Stomach (tissue), 19 donors: ENCODE measurements at regions of chr9 and their contacts with region 1.

Region 1: DNA sequence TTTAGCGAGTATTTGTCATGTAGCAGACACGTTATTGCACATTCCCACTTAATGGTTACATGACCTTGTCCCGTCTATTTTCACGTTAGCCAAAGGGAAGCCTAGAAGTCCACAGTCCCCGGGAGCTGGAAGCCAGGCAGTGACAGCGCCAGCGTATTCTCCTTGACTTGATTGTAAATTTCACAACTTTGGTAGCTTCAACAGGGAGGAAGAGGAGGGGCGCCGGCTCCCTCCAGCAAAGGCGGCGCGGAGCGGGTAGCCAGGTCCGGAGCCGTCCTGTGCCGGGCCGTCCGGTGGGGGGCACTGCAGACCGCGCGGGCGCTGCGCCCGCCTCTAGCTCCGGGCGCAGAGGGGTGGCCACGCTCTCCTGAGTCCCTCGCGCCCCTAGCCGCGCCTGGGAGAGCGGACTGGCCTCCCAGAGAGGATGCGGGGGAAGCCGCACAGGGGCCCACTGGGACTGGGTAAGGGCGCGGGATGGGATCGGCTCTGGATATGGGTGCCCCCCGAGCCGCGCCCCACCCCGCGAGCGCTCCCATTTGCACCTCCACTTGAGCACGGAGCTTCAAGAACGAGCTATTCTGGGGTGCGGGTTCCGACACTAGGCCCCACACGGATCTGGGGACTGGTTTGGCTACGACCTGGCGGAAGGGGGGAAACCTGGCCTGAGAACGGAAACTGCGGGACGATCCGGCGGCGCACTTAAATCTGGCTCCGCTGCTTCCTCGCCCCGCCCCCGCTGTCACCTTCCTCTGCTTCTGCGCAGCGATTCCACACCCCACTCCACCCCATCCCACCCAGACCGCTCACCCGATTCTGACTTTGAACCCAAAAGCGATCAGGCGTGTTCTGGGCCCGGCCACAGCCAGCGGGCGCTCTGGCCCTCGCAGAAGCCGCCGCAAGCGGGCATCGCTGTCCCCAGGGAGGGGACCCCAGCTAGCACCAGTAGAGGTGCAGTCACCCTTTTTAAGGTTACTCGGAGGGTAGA is 23.8 kb downstream of the KLF4 start:
- DNase-seq: peak; percentile 70 to 87
- H3K4me3 ChIP-seq: peak overlapping the region; percentile 47 to 61 (median 54)
- H3K27ac ChIP-seq: peak overlapping the region in 4 of 5 donors; percentile 5 to 77 (median 29)
- H3K4me1 ChIP-seq: peaks cover 5 to 19% (median 16%) of the 10 kb centered on the region in 4 donors
- H3K27me3 ChIP-seq: peaks cover 0 to 23% (median 16%) of the 10 kb centered on the region in 3 donors
- CTCF ChIP-seq: peak in 5 of 7 experiments; percentile 59 to 89 (median 74)
- EP300 ChIP-seq: no peak
- POLR2A ChIP-seq: no peak

Region 2: DNA sequence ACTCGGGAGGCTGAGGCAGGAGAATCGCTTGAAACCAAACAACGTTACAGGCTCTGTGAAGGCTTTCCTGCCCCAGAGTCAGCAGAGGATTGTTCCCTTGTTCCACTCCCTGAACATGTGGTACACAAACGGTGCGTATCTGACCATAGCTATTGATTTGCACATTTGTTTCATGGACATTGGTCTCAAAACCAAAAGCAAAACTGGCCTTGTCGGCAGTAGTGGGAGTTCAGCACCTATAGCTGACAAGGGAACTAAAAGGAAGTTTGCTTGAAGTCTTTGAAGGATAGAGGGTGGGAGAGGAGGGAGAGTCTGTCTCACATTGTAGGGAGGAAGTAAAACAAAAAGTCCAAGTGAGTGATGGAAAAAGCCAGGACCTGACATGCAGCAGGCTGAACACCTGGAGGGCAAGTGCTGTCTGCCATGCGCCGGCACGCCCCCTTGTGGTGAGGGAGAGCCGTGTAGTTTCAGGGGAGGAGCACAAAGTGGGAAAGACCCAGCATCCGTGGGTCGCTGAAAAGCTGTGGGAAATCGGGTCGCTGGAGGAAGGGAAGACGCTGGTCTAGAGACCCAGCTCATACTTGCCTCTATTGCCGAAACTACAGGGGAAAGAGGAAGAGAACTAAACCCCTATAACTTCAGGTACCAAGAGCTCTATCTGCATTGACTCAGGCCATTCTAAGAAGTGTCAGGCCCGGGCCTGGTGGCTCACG is 124.7 kb before region 1 on chr9:
- intact Hi-C with region 1: no loop called
- DNase-seq: peak; percentile 88 to 89
- H3K4me3 ChIP-seq: peak overlapping the region in 1 of 4 donors; percentile 19
- H3K27ac ChIP-seq: peak overlapping the region in 2 of 5 donors; percentile 3 to 68
- H3K4me1 ChIP-seq: peaks cover 0 to 24% (median 15%) of the 10 kb centered on the region in 4 donors
- H3K27me3 ChIP-seq: no peaks in the 10 kb centered on the region
- CTCF ChIP-seq: peak in 5 of 7 experiments; percentile 71 to 91 (median 88)
- EP300 ChIP-seq: no peak
- POLR2A ChIP-seq: no peak

Region 3: DNA sequence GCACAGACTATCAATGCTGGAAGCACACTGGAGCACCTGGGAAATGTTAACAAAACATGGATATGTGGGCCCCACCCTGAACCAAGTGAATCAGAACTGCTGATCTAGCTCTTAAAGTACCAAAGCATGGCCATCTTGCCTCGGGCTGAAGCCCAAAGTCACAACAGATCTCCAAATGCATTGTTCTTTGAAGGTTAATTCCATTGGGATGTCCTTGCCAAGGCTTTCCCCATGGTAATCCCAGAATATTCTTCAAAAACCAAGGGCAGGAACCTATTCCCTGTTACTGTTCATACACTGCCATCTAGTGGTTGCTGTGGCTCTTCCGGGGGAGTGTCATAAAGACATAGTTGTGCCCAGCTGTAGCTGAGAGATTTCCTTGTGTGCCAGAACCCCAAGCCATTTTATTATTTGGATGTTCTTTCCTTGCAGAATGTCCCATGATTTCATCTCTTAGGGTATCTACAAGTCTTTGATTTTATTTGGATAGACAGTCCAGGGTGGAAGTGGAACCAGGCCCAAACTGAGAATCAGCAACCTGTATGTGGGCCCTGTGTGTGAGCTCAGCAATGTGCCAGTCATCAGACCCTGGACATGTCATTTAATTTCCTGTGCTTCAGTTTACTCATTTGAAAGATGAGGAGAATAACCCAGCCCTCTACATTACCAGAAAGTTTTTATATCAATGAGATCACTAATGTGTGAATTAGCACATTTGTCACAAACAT is 1100.1 kb after region 1 on chr9:
- intact Hi-C with region 1: loop called (anchors 10 kb)
- DNase-seq: peak; percentile 60 to 94
- H3K4me3 ChIP-seq: no peak overlapping the region
- H3K27ac ChIP-seq: no peak overlapping the region
- H3K4me1 ChIP-seq: peaks cover 0 to 5% (median 0%) of the 10 kb centered on the region in 4 donors
- H3K27me3 ChIP-seq: no peaks in the 10 kb centered on the region
- CTCF ChIP-seq: peak in 5 of 7 experiments; percentile 64 to 80 (median 78)
- EP300 ChIP-seq: no peak
- POLR2A ChIP-seq: no peak

Region 4: GRCh38 chr9:108761655-108762347 is 1296.0 kb after region 1 on chr9:
- intact Hi-C with region 1: loop called (anchors 10 kb)
- DNase-seq: peak; percentile 59 to 82
- H3K4me3 ChIP-seq: no peak overlapping the region
- H3K27ac ChIP-seq: no peak overlapping the region
- H3K4me1 ChIP-seq: peaks cover 0 to 6% (median 2%) of the 10 kb centered on the region in 4 donors
- H3K27me3 ChIP-seq: no peaks in the 10 kb centered on the region
- CTCF ChIP-seq: peak in 5 of 7 experiments; percentile 64 to 77 (median 72)
- EP300 ChIP-seq: no peak
- POLR2A ChIP-seq: no peak